Activated CD4-positive, alpha-beta T cell treated with anti-CD3 and anti-CD28 coated beads for 36 hours (primary cell): ENCODE measurements at regions of chr16 and their contacts with region 1.

Region 1: GRCh38 chr16:3214904-3215600 is 19.9 kb downstream of the ZNF200 start:
- DNase-seq: peak; percentile 49
- ATAC-seq: peak; percentile 82
- H3K4me3 Mint-ChIP-seq: peak overlapping the region; percentile 4
- H3K27ac Mint-ChIP-seq: peak overlapping the region; percentile 94
- H3K4me1 Mint-ChIP-seq: peaks cover 32% of the 10 kb centered on the region
- H3K27me3 Mint-ChIP-seq: no peaks in the 10 kb centered on the region

Region 2: GRCh38 chr16:3182608-3183444 is 32.2 kb before region 1 on chr16:
- CTCF ChIA-PET with region 1: no interaction called
- POLR2A ChIA-PET with region 1: interaction called, 3 read pairs
- intact Hi-C with region 1: loop called in 1 of 2 experiments (anchors 5 kb)
- DNase-seq: peak; percentile 77
- ATAC-seq: peak; percentile 51
- H3K4me3 Mint-ChIP-seq: peak overlapping the region; percentile 60
- H3K27ac Mint-ChIP-seq: peak overlapping the region; percentile 79
- H3K4me1 Mint-ChIP-seq: peaks cover 24% of the 10 kb centered on the region
- H3K27me3 Mint-ChIP-seq: peaks cover 69% of the 10 kb centered on the region

Region 3: GRCh38 chr16:3188925-3189825 is 25.9 kb before region 1 on chr16:
- CTCF ChIA-PET with region 1: no interaction called
- POLR2A ChIA-PET with region 1: interaction called, 3 read pairs
- intact Hi-C with region 1: loop called (anchors 1 to 5 kb)
- DNase-seq: peak; percentile 78
- ATAC-seq: peak; percentile 42
- H3K4me3 Mint-ChIP-seq: peak overlapping the region; percentile 69
- H3K27ac Mint-ChIP-seq: peak overlapping the region; percentile 72
- H3K4me1 Mint-ChIP-seq: peaks cover 46% of the 10 kb centered on the region
- H3K27me3 Mint-ChIP-seq: peaks cover 66% of the 10 kb centered on the region

Region 4: GRCh38 chr16:3364774-3365427 is 149.8 kb after region 1 on chr16:
- CTCF ChIA-PET with region 1: no interaction called
- POLR2A ChIA-PET with region 1: no interaction called
- intact Hi-C with region 1: loop called in 1 of 2 experiments (anchors 10 kb)
- DNase-seq: peak; percentile 94
- ATAC-seq: peak; percentile 98
- H3K4me3 Mint-ChIP-seq: peak overlapping the region; percentile 76
- H3K27ac Mint-ChIP-seq: peak overlapping the region; percentile 91
- H3K4me1 Mint-ChIP-seq: peaks cover 8% of the 10 kb centered on the region
- H3K27me3 Mint-ChIP-seq: peaks cover 6% of the 10 kb centered on the region

Region 5: GRCh38 chr16:3467921-3468320 is 252.9 kb after region 1 on chr16:
- CTCF ChIA-PET with region 1: no interaction called
- POLR2A ChIA-PET with region 1: no interaction called
- intact Hi-C with region 1: no loop called
- DNase-seq: peak; percentile 26
- ATAC-seq: peak; percentile 69
- H3K4me3 Mint-ChIP-seq: no peak overlapping the region
- H3K27ac Mint-ChIP-seq: peak overlapping the region; percentile 51
- H3K4me1 Mint-ChIP-seq: peaks cover 50% of the 10 kb centered on the region
- H3K27me3 Mint-ChIP-seq: no peaks in the 10 kb centered on the region